ENCODE measurements at regions of chr6 and their contacts with region 1.

Region 1: DNA sequence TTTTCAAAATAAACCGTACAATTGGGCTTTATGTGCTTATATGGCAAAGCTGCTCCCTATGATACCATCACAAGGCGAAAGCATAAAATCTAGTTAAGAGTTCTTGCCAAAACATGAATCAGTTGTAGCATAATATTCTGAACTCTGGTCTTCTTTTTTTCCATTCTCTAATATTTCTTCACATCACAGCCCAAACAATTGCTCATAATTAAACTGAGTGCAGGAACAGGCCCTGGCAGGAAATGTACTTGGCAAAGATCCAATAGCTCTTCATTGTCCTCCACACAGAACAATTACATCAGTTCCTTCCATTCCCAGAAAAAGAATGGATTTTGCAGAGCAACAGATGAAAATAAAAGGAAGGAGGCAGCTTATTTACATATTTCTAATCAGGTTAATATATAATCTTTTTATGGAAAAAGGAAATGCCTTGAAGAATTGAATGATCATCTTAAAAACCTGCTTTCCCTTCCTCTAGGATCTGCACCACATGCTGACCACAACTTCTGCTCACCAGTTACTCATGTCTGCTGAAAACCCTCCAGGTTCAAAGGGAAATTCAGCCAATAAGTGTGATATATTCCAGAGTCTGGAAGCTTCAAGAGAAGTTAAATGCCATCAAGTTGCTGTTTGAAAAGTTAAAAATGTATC is 123.3 kb upstream of the COL21A1 start:
- DNase-seq: peak; percentile 87
- ATAC-seq: peak; percentile 42
- H3K4me3 ChIP-seq: no peak overlapping the region
- H3K27ac ChIP-seq: no peak overlapping the region
- H3K4me1 ChIP-seq: peaks cover 12% of the 10 kb centered on the region
- H3K27me3 ChIP-seq: no peaks in the 10 kb centered on the region
- CTCF ChIP-seq: no peak
- POLR2A ChIP-seq: no peak
- RAD21 ChIP-seq: no peak

Region 2: GRCh38 chr6:56416247-56416646 is 45.6 kb after region 1 on chr6:
- CTCF ChIA-PET with region 1: no interaction called
- POLR2A ChIA-PET with region 1: no interaction called
- dilution Hi-C with region 1: no loop called
- in situ Hi-C with region 1: no loop called
- intact Hi-C with region 1: loop called (anchors 5 kb)
- DNase-seq: peak; percentile 26
- ATAC-seq: peak; percentile 42
- H3K4me3 ChIP-seq: no peak overlapping the region
- H3K27ac ChIP-seq: no peak overlapping the region
- H3K4me1 ChIP-seq: no peaks in the 10 kb centered on the region
- H3K27me3 ChIP-seq: no peaks in the 10 kb centered on the region
- CTCF ChIP-seq: no peak
- POLR2A ChIP-seq: no peak
- RAD21 ChIP-seq: no peak

Region 3: GRCh38 chr6:56451165-56451739 is 80.6 kb after region 1 on chr6:
- CTCF ChIA-PET with region 1: no interaction called
- POLR2A ChIA-PET with region 1: no interaction called
- dilution Hi-C with region 1: no loop called
- in situ Hi-C with region 1: no loop called
- intact Hi-C with region 1: loop called (anchors 5 kb)
- DNase-seq: peak; percentile 69
- ATAC-seq: peak; percentile 34
- H3K4me3 ChIP-seq: no peak overlapping the region
- H3K27ac ChIP-seq: peak overlapping the region; percentile 27; the same call in 1 of the 2 replicates
- H3K4me1 ChIP-seq: peaks cover 5% of the 10 kb centered on the region
- H3K27me3 ChIP-seq: no peaks in the 10 kb centered on the region
- CTCF ChIP-seq: no peak
- POLR2A ChIP-seq: no peak
- RAD21 ChIP-seq: no peak